Activated CD8-positive, alpha-beta T cell treated with anti-CD3 and anti-CD28 coated beads, Interleukin-2, amount 10 ng/mL, durations not matched to agents 7 days and 5 days (primary cell): ENCODE measurements at regions of chr1 and their contacts with region 1.

Region 1: GRCh38 chr1:8727809-8728213 is 89.6 kb downstream of the RERE start:
- DNase-seq: no peak
- ATAC-seq: no peak
- H3K4me3 Mint-ChIP-seq: no peak overlapping the region
- H3K27ac Mint-ChIP-seq: no peak overlapping the region
- H3K4me1 Mint-ChIP-seq: peaks cover 12% of the 10 kb centered on the region
- H3K27me3 Mint-ChIP-seq: no peaks in the 10 kb centered on the region

Region 2: GRCh38 chr1:8409106-8409505 is 318.7 kb before region 1 on chr1:
- CTCF ChIA-PET with region 1: interaction called, 16 read pairs
- POLR2A ChIA-PET with region 1: no interaction called
- DNase-seq: no peak
- ATAC-seq: peak; percentile 53
- H3K4me3 Mint-ChIP-seq: no peak overlapping the region
- H3K27ac Mint-ChIP-seq: no peak overlapping the region
- H3K4me1 Mint-ChIP-seq: peaks cover 34% of the 10 kb centered on the region
- H3K27me3 Mint-ChIP-seq: no peaks in the 10 kb centered on the region

Region 3: DNA sequence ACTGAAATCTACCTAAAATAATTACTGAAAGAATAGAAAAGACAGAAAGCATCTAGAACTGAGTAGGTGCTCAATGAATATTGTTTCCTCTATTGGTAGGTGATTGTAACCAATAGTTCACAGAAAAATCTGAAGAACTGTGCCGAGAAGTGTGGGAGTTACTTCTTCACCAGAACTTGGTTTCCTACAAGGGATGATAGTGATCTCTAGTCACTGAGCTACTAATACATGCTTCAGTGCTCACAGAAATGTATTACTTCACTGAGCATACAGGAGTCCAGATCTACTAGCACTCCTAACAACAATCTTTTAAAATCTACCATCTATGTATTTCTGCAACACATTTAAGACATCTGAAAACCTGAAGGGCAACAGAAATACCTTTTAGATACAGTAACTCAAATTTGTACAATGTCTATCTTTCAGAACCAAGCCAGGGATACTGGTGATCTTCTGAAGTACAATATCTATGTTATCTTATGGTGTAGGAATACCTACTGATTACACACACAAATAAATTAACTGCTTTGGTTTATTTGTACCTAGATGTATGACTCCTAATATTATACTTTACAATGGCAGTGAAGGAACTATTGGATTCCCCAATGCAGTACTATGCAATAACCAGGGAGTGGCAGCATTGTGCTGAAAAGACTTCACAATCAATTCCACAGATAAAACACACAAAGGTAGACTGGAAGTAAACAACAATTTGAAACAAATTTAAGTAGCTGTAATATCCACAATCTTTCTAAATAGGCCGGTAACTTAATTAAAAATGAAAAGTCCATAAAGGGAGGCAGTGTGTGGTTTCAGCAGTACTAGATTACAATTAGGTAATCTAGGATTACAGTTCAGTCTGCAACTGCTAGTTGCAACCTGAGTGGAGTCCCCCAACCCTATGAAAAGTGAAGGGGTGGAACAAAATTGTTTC is 166.9 kb before region 1 on chr1:
- CTCF ChIA-PET with region 1: interaction called, 145 read pairs
- POLR2A ChIA-PET with region 1: no interaction called
- DNase-seq: peak; percentile 48
- ATAC-seq: peak; percentile 28
- H3K4me3 Mint-ChIP-seq: no peak overlapping the region
- H3K27ac Mint-ChIP-seq: no peak overlapping the region
- H3K4me1 Mint-ChIP-seq: peaks cover 16% of the 10 kb centered on the region
- H3K27me3 Mint-ChIP-seq: no peaks in the 10 kb centered on the region

Region 4: DNA sequence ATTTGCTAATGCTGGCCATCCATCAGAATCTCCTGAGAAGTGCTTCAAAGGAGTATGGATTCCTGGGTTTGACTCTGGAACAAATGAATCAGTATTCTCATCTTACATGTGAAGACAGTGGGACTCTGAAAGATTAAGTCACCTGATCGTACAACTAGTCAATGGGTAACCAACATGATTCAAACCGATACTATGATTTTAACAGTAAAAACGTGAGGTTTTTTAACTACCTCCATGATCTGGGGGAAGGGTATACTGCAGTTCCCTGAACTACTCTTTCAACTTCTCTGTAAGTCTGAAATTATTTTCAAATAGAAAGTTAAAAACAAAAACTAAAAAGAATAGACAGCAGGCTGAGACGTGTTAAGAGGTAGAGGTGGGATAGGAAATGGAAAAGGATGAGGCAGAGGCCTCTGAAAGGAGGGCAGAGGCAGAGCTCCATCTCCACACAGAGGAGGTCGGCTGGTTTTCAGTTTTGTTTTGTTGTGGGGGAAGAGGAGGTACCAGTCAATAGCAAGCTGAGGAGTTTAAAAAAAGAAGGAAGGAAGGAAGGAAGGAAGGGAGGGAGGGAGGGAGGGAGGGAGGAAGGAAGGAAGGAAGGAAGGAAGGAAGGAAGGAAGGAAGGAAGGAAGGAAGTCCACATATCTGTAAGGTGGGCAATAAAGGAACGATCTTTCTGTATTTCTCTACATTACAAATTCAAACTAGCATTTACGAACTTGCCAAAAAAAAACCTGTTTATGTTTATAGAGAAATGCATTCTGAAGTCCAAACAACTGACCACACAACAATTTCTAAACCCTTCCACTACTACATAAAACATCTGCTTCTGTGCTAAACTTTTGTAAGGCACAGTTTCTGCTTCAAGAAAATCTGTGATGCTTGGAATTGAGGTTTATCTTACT is 123.5 kb before region 1 on chr1:
- CTCF ChIA-PET with region 1: interaction called, 14 read pairs
- POLR2A ChIA-PET with region 1: no interaction called
- DNase-seq: peak; percentile 68
- ATAC-seq: peak; percentile 88
- H3K4me3 Mint-ChIP-seq: peak overlapping the region; percentile 70
- H3K27ac Mint-ChIP-seq: peak overlapping the region; percentile 91
- H3K4me1 Mint-ChIP-seq: peaks cover 37% of the 10 kb centered on the region
- H3K27me3 Mint-ChIP-seq: no peaks in the 10 kb centered on the region

Region 5: DNA sequence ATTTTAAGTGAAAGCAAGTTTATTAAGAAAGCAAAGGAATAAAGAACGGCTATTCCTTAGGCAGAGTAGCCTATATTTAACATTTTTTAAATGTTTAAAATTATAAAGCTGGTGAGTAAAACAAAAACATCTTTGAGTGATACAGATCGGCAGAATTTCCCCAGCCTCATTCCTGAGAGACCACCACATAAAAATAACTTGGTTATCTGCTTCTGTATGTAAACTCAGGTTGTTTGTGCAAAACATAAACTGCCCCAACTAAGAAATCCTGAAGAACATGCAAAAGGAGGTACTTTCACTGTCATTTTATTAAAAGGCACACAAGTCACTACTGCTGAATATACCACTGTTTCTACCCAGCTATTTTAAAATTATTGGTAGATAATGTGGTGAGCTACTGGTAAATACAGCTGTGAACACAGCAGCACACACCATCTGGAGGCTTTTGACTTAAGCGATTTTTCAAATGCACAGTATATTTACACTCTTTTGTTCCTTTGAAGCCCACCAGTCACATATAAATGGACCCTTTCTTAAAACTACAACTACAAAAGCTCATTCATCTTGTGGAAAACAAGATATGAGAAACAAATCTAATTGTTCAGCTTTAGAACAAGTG is 29.7 kb before region 1 on chr1:
- CTCF ChIA-PET with region 1: interaction called, 35 read pairs
- POLR2A ChIA-PET with region 1: interaction called, 7 read pairs
- DNase-seq: no peak
- ATAC-seq: no peak
- H3K4me3 Mint-ChIP-seq: no peak overlapping the region
- H3K27ac Mint-ChIP-seq: no peak overlapping the region
- H3K4me1 Mint-ChIP-seq: peaks cover 35% of the 10 kb centered on the region
- H3K27me3 Mint-ChIP-seq: no peaks in the 10 kb centered on the region

Region 6: DNA sequence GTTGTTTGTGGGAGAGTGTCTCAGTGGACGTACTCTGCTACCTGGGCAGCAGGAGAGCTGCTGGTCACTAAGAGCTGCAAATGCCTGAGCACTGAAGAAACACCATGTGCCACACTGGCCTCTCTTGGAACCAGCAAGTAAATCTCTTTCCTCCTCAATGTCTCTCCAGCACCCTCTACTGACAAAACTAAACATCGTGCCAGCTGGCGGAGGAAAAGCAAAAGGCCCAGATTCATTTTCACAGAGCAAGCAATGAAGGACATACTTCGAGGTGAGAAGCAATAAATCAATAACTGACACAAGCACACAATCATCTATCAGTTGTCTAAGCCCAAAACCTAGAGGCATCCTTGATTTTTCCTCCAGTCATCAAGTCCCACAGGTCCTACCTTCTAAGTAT is 11.6 kb after region 1 on chr1:
- CTCF ChIA-PET with region 1: interaction called, 14 read pairs
- POLR2A ChIA-PET with region 1: no interaction called
- DNase-seq: no peak
- ATAC-seq: no peak
- H3K4me3 Mint-ChIP-seq: no peak overlapping the region
- H3K27ac Mint-ChIP-seq: no peak overlapping the region
- H3K4me1 Mint-ChIP-seq: no peaks in the 10 kb centered on the region
- H3K27me3 Mint-ChIP-seq: no peaks in the 10 kb centered on the region